ENCODE measurements at regions of chr17 and their contacts with region 1.

Region 1: GRCh38 chr17:15257258-15257788 is 7.8 kb downstream of the PMP22 start:
- DNase-seq: peak; percentile 76
- H3K4me3 ChIP-seq: peak overlapping the region in 2 of 4 donors; percentile 2 to 67
- H3K27ac ChIP-seq: peak overlapping the region; percentile 92 to 97 (median 94)
- H3K4me1 ChIP-seq: peaks cover 27 to 88% (median 48%) of the 10 kb centered on the region in 4 donors
- H3K27me3 ChIP-seq: peaks cover 8% of the 10 kb centered on the region
- CTCF ChIP-seq: peak; percentile 84 to 91 (median 86)
- EP300 ChIP-seq: no peak
- POLR2A ChIP-seq: no peak

Region 2: DNA sequence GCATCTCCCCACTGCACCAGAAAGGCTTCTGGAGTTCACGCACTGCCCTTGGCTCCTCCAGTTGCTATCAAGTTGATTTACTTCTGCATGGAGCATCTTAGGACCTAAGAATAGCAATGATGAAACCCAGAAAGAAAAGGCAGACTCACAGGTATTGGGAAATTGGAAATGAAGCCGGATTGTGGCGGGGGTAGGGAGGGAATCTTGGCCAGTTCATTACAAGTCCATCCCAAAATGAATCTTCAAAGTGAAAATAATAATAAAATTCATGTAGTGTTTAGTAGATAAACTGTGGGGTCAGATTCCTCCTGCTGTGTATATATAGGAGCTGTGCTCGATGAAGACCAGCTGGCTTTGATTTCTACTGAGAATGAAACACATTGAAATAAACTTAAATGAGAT is 50.4 kb after region 1 on chr17:
- in situ Hi-C with region 1: no loop called
- intact Hi-C with region 1: loop called (anchors 5 kb)
- DNase-seq: peak; percentile 41
- H3K4me3 ChIP-seq: no peak overlapping the region
- H3K27ac ChIP-seq: peak overlapping the region; percentile 40 to 55 (median 53)
- H3K4me1 ChIP-seq: peaks cover 6 to 11% (median 8%) of the 10 kb centered on the region in 4 donors
- H3K27me3 ChIP-seq: no peaks in the 10 kb centered on the region
- CTCF ChIP-seq: no peak
- EP300 ChIP-seq: peak; percentile 73
- POLR2A ChIP-seq: no peak

Region 3: GRCh38 chr17:15351925-15352324 is 94.6 kb after region 1 on chr17:
- in situ Hi-C with region 1: loop called in 1 of 4 experiments (anchors 10 kb)
- intact Hi-C with region 1: loop called (anchors 5 kb)
- DNase-seq: peak; percentile 25
- H3K4me3 ChIP-seq: no peak overlapping the region
- H3K27ac ChIP-seq: peak overlapping the region; percentile 59 to 85 (median 79)
- H3K4me1 ChIP-seq: peaks cover 22 to 58% (median 40%) of the 10 kb centered on the region in 4 donors
- H3K27me3 ChIP-seq: no peaks in the 10 kb centered on the region
- CTCF ChIP-seq: no peak
- EP300 ChIP-seq: no peak
- POLR2A ChIP-seq: no peak

Region 4: GRCh38 chr17:15409721-15410250 is 152.5 kb after region 1 on chr17:
- in situ Hi-C with region 1: loop called in 1 of 4 experiments (anchors 25 kb)
- intact Hi-C with region 1: no loop called
- DNase-seq: peak; percentile 21
- H3K4me3 ChIP-seq: no peak overlapping the region
- H3K27ac ChIP-seq: peak overlapping the region; percentile 74 to 83 (median 78)
- H3K4me1 ChIP-seq: peaks cover 0 to 11% (median 5%) of the 10 kb centered on the region in 4 donors
- H3K27me3 ChIP-seq: no peaks in the 10 kb centered on the region
- CTCF ChIP-seq: no peak
- EP300 ChIP-seq: peak; percentile 56
- POLR2A ChIP-seq: peak; percentile 50

Region 5: DNA sequence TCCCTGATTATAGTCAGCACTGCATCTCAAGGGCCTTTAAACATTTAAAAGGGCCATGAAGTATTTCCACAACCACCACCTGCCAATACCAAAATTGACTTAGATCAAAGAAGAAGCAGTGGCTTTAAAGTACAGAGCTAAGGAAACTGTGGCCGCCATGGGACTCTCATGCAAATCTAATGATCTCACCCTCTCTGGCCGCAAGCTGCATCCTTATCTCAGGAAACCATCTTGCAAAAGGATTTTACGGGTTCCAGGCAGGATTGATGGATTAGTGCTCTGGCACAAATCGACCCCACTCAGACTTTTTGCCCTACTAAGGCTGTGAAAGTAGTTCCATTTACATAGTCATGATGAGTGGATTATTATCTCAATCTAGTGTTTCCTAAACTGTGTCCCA is 187.5 kb after region 1 on chr17:
- in situ Hi-C with region 1: no loop called
- intact Hi-C with region 1: no loop called
- DNase-seq: no peak
- H3K4me3 ChIP-seq: no peak overlapping the region
- H3K27ac ChIP-seq: no peak overlapping the region
- H3K4me1 ChIP-seq: no peaks in the 10 kb centered on the region
- H3K27me3 ChIP-seq: no peaks in the 10 kb centered on the region
- CTCF ChIP-seq: no peak
- EP300 ChIP-seq: no peak
- POLR2A ChIP-seq: no peak

Region 6: DNA sequence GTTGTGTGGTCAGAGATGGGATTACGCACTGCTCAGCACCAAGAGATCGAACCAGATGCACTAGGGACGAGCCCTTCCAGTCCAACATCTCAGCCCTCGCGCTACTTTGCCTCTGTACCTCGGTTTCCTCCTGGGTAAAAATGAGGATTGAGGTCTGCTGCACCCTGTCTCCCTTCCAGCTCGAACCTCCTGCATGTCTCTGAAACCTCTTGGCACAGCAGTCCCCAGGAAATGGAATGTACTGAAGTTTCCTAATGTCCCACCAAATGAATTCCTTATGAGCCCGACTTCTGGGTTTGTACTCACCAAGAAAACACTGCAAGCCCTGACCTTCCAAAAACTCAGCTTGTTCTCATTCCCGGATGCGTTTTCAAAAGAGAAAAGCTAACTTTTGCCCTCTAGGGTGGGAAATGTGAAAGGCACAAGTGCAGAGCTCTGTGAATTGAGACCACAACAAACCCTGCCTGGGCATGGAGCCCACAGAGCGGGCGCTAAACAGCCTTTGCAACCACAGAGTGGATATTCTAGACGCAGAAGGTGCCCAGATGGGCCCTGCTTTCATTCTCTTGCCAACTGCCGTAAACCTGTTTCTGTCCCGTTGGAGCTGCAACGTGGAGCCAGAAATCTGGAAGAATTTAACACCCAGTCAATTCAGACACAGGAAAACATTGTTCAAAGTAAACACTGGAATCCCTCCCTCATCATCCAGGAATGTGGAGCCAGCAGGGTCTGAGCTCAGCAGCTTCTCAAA is 199.8 kb after region 1 on chr17:
- in situ Hi-C with region 1: no loop called
- intact Hi-C with region 1: loop called (anchors 2 kb)
- DNase-seq: peak; percentile 46
- H3K4me3 ChIP-seq: peak overlapping the region in 1 of 4 donors; percentile 2
- H3K27ac ChIP-seq: peak overlapping the region; percentile 67 to 86 (median 68)
- H3K4me1 ChIP-seq: peaks cover 5 to 29% (median 11%) of the 10 kb centered on the region in 4 donors
- H3K27me3 ChIP-seq: no peaks in the 10 kb centered on the region
- CTCF ChIP-seq: peak in 4 of 5 experiments; percentile 20 to 47 (median 26)
- EP300 ChIP-seq: no peak
- POLR2A ChIP-seq: no peak

Region 7: DNA sequence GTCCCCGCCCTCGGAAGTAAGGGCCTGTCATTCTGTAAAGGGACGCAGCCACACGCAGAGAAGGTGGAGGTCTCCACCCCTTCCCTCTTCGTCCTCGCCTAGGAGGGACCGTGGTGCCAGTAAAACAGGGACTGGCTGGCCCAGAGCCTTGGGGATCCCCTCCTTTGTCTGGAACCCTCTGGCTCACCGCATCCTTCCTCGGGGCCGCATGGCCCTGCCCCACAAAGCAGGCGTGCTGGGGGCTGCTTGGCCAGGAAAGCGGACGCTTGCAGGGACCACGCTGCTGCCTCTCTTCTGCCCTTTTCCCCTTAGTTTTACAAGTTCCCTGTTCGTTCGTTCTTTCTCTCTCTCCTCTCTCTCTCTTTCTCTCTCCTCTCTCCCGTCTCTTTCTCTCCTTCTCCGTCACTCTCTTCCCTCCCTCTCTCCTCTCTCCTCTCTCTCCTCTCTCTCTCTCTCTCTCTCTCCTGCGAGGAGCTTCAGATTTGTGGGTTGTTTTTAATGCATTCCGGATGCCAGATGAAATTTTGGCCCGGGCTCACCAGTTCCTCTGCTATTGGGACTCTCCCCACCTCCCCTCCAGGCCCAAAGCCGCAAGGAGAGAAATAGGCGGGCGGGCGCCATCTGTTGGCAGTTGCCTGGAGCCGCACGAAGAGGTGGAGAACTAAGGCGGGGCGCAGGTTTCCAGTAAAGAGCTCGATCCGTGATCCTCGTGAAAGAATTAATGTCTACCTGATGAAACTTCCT is 245.2 kb after region 1 on chr17:
- in situ Hi-C with region 1: loop called (anchors 5 to 10 kb)
- intact Hi-C with region 1: loop called (anchors 1 kb)
- DNase-seq: peak; percentile 85
- H3K4me3 ChIP-seq: peak overlapping the region in 3 of 4 donors; percentile 5 to 38 (median 9)
- H3K27ac ChIP-seq: peak overlapping the region; percentile 62 to 85 (median 76)
- H3K4me1 ChIP-seq: peaks cover 0 to 12% (median 2%) of the 10 kb centered on the region in 4 donors
- H3K27me3 ChIP-seq: no peaks in the 10 kb centered on the region
- CTCF ChIP-seq: peak; percentile 79 to 91 (median 83)
- EP300 ChIP-seq: no peak
- POLR2A ChIP-seq: peak; percentile 14

Measured in transverse colon (tissue), 4 donors.